BJ (cell line): ENCODE measurements at regions of chr1 and their contacts with region 1.

Region 1: GRCh38 chr1:152459596-152460528 is 45.8 kb upstream of the CRNN start:
- DNase-seq: no peak
- H3K4me3 ChIP-seq: no peak overlapping the region
- H3K27me3 ChIP-seq: no peaks in the 10 kb centered on the region
- CTCF ChIP-seq: peak; percentile 91

Region 2: DNA sequence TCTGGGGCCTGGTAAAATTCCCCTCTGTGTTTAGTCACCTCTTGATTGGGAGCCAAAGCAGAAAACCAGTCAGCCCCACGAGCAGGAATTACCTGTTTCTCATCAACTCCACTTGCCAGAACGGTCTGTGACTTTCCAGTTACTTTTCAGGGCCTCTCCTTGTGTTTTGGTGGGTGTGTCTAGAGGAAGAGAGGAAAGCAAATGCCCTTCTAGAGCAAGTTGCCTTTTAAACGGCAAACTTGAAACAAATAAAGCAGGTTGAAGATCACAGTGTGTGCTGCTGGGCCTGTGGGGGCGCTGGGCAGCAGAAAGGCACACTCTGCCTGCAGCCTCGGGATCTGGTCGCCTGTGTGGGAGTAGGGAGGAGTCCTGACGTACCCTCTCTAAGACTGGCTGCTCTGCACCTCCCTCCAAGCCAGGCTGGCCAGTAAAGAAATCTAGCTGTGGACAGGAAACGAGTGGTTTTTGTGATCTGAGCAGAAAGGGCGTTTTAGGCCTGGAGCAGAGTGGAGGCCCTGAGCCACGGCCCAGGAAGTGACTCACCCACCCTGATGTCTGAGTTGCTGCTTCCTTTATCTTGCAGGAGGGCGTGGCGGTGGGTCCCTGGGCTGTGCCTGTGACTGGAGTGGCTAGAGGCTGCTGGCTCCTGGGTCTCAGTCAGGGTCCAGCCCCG is 412.0 kb before region 1 on chr1:
- CTCF ChIA-PET with region 1: interaction called, 14 read pairs
- POLR2A ChIA-PET with region 1: no interaction called
- DNase-seq: peak; percentile 99
- H3K4me3 ChIP-seq: no peak overlapping the region; the same call in 1 of the 2 replicates
- H3K27me3 ChIP-seq: peaks cover 2% of the 10 kb centered on the region; the same call in 1 of the 2 replicates
- CTCF ChIP-seq: peak; percentile 74

Region 3: DNA sequence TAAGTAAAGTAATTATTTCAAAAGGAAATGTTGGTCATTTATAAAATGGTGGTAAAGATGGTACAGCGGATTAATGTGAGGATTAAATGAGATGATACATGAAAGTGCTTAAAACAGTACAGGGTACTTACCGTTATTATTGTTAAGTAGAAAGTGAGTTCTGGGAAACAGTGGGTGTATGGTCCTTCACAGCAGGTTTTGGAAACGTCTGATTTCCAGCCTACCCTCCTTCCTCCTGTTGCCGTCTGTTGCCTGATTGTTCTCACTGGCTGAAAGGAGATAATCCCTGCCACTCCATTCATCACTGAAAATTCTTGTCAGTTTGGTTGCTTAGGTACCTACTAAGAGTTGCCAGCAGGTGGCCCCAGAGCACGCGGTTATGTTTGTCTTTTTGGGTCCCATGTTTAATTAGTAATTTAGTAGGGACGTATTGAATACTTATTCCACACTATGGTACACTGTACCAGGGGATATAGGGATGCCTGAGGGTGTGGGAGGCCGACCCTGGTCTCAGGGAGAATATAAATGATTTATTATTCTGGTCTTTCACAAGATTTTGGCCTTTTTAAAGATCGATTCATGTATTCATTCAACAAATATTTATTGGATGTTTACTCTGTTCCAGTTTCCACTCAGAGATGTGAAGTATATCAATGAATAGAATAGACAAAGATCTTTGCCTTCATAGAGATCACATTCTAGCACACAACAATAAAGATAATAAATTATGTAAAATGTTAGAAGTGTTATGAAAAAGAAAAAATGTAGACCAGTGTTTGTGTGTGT is 270.0 kb before region 1 on chr1:
- CTCF ChIA-PET with region 1: interaction called, 118 read pairs
- POLR2A ChIA-PET with region 1: no interaction called
- DNase-seq: no peak
- H3K4me3 ChIP-seq: no peak overlapping the region
- H3K27me3 ChIP-seq: no peaks in the 10 kb centered on the region; the same call in 1 of the 2 replicates
- CTCF ChIP-seq: peak; percentile 80

Region 4: DNA sequence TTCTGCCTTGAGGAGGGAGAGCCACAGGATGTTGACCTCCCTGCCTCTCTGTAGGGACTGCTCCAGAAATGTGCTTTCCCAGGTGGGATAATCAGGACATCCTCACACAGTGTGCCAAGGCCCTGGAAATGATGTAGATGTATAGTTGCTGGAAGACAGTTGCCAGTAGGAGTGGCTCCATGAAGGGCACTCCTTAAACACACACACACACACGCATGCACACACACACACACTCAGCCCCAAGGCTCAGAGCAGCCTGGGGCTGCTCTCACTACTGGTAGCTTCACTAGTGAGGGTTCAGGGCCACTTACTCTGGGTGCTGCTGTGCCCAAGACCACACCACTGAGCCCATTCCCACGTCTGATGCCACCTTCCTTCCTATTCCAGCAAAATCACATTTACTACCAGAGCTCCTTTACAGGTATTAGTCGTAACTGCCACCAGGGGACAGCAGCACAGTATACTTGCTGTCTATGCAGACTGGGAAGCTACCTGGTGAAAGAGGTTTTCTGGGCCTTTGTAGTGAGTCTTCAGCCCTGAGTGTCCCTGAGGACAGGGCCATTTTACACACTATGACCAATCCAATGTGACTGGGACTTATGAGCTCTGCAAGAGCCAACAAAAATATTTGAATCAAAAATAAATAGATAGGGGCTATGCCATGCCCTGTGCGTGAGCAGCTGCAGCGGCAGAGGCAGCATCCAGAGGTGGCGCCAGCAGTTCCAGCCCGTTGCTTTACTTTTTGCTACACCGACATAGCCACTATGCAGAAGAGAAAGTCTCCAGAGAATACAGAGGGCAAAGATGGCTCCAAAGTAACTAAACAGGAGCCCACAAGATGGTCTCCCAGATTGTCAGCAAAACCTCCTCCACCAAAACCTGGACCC is 60.8 kb before region 1 on chr1:
- CTCF ChIA-PET with region 1: interaction called, 38 read pairs
- POLR2A ChIA-PET with region 1: no interaction called
- DNase-seq: no peak
- H3K4me3 ChIP-seq: no peak overlapping the region
- H3K27me3 ChIP-seq: no peaks in the 10 kb centered on the region; the same call in 1 of the 2 replicates
- CTCF ChIP-seq: peak; percentile 42

Region 5: GRCh38 chr1:152440635-152441471 is 19.0 kb before region 1 on chr1:
- CTCF ChIA-PET with region 1: interaction called, 47 read pairs
- POLR2A ChIA-PET with region 1: interaction called, 3 read pairs
- DNase-seq: no peak
- H3K4me3 ChIP-seq: no peak overlapping the region
- H3K27me3 ChIP-seq: no peaks in the 10 kb centered on the region; the same call in 1 of the 2 replicates
- CTCF ChIP-seq: peak; percentile 87

Region 6: DNA sequence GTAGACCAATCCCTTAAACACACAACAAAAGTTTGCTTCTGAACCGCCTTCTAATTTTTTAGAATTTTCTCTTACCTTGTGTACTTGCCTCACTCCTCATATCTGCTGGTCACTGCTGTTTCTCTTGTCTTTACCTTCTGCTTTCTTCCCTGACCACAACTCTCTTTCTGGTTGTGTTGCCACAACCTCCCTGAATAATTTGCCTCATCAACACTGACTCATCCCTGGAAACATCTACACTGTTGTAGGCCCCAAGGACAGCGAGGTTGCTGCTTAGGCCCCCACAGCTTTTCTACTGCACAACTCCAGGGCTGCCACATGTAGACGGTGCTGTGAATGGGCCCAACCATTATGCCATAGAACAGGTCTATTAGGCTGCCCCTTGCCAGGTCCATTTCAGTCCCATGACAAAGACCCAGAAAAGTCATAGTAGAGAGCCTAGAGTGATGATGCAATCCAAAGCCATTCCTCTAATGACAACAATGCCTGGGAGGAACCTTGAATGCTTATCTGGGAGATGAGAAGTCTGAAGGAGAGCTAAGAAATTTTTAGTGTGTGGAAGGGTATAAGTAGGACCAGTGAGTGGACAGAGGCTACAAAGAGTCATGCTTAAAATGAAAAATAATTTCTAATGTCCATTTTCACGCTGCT is 14.2 kb after region 1 on chr1:
- CTCF ChIA-PET with region 1: interaction called, 10 read pairs
- POLR2A ChIA-PET with region 1: no interaction called
- DNase-seq: no peak
- H3K4me3 ChIP-seq: no peak overlapping the region
- H3K27me3 ChIP-seq: no peaks in the 10 kb centered on the region
- CTCF ChIP-seq: no peak

Region 7: DNA sequence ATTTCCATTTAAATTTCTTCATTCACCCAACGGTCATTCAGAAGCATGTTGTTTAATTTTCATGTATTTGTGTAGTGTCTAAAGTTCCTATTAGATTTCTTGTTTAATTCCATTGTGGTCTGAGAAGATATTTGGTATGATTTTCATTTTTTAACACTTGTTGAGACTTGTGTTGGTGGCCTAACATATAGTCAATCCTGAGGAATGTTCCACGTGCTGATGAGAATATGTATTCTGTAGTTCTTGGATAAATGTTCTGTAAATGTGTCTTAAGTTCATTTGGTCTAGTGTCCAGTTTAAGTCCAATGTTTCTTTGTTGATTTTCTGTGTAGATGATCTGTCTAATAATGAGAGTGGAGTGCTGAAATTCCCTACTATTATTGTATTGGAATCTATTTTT is 28.0 kb after region 1 on chr1:
- CTCF ChIA-PET with region 1: no interaction called
- POLR2A ChIA-PET with region 1: no interaction called
- DNase-seq: no peak
- H3K4me3 ChIP-seq: no peak overlapping the region
- H3K27me3 ChIP-seq: no peaks in the 10 kb centered on the region
- CTCF ChIP-seq: no peak

Region 8: DNA sequence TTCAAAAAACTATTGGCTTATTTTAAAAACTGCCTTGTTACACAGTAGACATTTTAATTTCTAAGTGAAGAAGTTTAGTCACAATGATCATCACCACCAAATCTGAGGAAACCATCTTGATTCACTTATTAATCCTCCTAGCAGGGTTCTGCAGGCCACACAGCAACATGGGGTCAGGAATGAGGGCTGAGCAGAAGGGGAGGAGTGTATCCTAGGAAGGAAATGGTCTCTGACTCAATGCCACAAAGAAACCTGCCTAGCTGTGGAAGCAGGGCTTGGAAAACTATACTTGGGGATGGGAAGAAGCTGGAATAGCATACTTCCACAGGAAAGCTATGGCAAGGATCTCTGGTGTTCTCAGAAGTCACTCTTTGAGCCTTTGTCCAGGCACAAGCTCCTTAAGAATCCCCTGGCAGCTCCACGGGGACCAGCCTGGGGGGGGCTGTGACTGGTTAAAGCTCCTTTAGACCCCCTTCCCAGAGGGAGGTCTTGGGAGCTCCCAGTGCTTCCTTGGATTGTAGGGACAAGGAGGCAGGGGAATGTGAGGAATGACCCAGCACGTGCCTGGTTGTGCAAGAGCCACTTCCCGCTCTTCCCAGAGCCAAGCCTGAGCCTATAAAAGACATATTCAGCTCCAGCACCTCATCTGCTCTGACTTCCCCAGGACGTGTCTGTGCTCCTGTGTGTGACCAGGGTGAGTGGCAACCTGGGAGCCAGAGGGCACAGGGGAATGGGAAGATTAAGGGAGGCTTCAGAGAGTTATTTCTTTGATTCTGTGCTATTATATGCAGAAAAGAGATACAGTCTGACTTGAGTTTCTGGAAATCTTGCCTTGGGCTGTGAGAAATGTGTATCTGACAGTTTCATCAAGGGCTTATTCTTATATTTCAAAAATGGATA is 238.1 kb after region 1 on chr1 and contains the start of gene LCE2A:
- CTCF ChIA-PET with region 1: no interaction called
- POLR2A ChIA-PET with region 1: no interaction called
- DNase-seq: no peak
- H3K4me3 ChIP-seq: no peak within 1 kb of the TSS
- H3K27me3 ChIP-seq: no peaks in the 10 kb centered on the region
- CTCF ChIP-seq: no peak
- polyA plus RNA-seq, gene LCE2A: not detected in 2 replicates